ENCODE measurements at regions of chr17 and their contacts with region 1.

Region 1: DNA sequence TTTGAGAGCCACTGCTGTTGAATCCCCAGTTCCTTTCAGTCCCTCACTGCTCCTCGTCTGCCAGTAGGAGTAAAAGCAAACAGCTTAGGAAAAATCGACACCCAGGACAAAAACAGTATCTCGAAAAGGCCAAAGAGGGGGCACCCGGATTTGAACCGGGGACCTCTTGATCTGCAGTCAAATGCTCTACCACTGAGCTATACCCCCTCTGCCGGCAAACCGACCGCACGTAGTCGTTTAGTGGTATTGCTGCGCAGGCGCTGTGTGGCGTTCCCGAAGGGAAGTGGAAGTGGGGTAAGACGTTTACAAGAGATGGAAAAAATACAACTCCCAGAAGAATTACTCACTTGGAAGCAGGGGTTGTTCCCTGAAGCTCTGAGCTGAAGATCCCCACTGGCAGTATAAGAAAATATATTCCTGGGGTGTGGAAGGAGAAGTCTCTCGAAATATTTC is 2.2 kb upstream of the PLXDC1 start:
- DNase-seq: peak; percentile 96
- H3K4me3 Mint-ChIP-seq: peak overlapping the region; percentile 94
- H3K27ac Mint-ChIP-seq: peak overlapping the region; percentile 95
- H3K4me1 Mint-ChIP-seq: peaks cover 27% of the 10 kb centered on the region
- H3K27me3 Mint-ChIP-seq: peaks cover 4% of the 10 kb centered on the region

Region 2: DNA sequence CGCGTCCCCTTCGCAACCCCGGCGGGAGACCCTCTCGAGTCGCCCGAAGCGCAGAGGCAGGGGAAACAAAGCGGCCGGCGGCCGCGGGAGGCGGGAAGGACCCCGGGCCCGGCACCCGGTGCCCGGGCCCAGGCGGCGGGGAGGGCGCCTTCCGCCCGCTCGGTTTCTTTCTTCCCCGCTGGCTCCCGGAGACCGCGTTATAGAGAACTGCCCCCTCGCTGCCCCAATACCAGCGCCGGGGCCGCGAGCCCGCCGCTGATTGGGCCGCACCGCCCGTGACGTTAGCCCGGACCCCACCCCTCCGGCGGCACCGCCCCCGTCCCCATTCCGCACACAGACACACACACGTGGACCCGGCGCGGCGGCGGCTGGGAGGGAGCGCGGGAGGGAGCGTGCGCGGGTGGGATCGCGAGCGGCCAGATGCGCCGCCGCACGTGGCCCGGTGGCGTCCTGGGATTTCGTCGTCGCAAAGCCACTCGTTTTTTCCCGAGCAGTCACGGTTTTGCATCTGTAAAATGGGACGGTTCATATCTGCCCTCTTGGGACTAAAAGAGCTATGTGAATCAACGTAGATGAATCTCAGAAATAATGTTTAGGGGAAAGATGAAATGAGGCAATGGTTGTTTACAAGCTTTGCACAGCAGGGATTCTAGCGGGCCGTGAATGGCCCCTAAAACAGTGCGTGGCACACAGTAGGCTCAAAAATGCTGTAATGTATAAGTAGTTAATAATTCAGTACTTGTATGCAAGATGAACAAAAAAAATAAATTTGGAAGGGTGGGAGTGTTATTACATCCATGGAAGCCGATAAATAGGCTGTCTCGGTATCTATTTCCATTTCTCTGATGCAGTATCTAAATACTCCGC is 478.6 kb before region 1 on chr17 and contains the start of gene EPOP:
- CTCF ChIA-PET with region 1: no interaction called
- intact Hi-C with region 1: loop called (anchors 5 kb)
- DNase-seq: peak; percentile 91
- H3K4me3 Mint-ChIP-seq: peak within 1 kb of the TSS; percentile 63
- H3K27ac Mint-ChIP-seq: peak within 1 kb of the TSS; percentile 84
- H3K4me1 Mint-ChIP-seq: peaks cover 52% of the 10 kb centered on the region
- H3K27me3 Mint-ChIP-seq: peaks cover 13% of the 10 kb centered on the region
- total RNA-seq, gene EPOP: 17.6 to 19.2 TPM

Region 3: GRCh38 chr17:38752119-38752929 is 401.3 kb before region 1 on chr17 and contains the start of gene PSMB3:
- CTCF ChIA-PET with region 1: no interaction called
- intact Hi-C with region 1: loop called (anchors 1 kb)
- DNase-seq: peak; percentile 99
- H3K4me3 Mint-ChIP-seq: peak within 1 kb of the TSS; percentile 91
- H3K27ac Mint-ChIP-seq: peak within 1 kb of the TSS; percentile 95
- H3K4me1 Mint-ChIP-seq: peaks cover 48% of the 10 kb centered on the region
- H3K27me3 Mint-ChIP-seq: peaks cover 26% of the 10 kb centered on the region
- total RNA-seq, gene PSMB3: 368 to 369 TPM

Region 4: DNA sequence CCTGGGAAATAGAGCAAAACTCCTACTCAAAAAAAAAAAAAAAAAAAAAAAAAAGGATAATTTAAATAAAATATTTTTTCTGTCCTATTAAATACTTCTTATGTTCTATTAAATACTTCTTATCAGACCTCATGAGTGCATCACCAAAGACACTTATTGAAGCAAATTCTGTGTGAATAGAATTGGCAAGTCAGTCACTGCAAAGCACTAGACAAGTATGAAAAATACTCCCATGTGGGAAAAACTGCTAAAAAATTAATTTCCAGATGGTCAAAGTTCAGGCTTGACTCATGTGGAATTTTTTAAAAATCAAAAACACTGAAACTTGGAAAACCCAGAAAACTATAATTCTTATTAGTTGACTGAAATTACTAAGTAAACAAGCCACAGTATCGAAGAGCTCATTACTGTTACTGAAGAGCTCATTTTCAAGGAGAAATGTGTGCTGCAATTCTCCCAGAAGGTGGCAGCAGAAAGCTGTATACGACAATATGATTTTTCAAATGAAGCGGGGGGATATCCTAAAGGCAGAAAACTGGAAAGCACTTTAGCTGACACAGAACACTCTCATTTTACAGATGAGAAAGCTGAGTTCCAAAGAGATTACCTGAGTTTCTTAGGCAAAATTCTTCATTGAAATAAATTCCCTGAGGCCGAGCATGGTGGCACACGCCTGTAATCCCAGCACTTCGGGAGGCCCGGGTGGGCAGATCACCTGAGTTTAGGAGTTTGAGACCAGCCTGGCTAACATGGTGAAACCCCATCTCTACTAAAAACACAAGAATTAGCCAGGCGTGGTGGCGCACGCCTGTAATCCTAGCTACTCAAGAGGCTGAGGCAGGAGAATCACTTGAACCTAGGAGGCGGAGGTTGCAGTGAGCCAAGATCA is 170.5 kb before region 1 on chr17:
- CTCF ChIA-PET with region 1: interaction called, 106 read pairs
- intact Hi-C with region 1: loop called (anchors 1 kb)
- DNase-seq: peak; percentile 66
- H3K4me3 Mint-ChIP-seq: no peak overlapping the region
- H3K27ac Mint-ChIP-seq: no peak overlapping the region
- H3K4me1 Mint-ChIP-seq: no peaks in the 10 kb centered on the region
- H3K27me3 Mint-ChIP-seq: no peaks in the 10 kb centered on the region

Region 5: DNA sequence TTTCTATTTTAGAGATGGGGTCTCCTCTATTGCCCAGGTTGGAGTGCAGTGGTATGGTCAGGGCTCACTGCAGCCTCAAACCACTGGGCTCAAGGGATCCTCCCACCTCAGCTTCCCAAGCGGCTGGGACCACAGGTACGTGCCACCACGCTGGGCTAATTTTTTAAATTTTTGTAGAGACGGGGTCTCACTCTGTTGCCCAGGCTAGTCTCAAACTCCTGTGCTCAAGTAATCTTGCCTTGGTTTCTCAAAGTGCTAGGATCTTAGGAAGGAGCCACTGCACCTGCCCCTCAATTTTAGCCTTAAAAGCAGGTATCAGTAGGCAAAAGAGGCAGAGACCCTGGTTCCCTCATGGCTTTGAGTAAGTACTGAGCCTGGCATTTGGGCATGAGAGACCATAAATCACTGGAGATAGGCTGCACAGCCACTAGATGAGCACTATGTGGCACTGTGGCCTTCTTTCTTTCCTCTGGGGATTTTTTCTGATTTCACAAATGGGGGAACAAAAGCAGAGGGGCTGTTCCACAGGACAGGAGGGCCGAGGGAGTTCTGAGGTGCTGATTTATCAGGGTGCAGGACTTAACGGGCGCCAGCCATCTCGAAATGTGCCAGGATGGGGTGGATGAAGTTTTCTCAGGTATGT is 84.4 kb before region 1 on chr17:
- CTCF ChIA-PET with region 1: interaction called, 10 read pairs
- intact Hi-C with region 1: loop called (anchors 1 kb)
- DNase-seq: peak; percentile 32
- H3K4me3 Mint-ChIP-seq: no peak overlapping the region
- H3K27ac Mint-ChIP-seq: no peak overlapping the region
- H3K4me1 Mint-ChIP-seq: peaks cover 2% of the 10 kb centered on the region
- H3K27me3 Mint-ChIP-seq: no peaks in the 10 kb centered on the region

Region 6: GRCh38 chr17:39134878-39135277 is 18.7 kb before region 1 on chr17:
- CTCF ChIA-PET with region 1: no interaction called
- intact Hi-C with region 1: no loop called
- DNase-seq: no peak
- H3K4me3 Mint-ChIP-seq: no peak overlapping the region
- H3K27ac Mint-ChIP-seq: no peak overlapping the region
- H3K4me1 Mint-ChIP-seq: no peaks in the 10 kb centered on the region
- H3K27me3 Mint-ChIP-seq: no peaks in the 10 kb centered on the region

Region 7: DNA sequence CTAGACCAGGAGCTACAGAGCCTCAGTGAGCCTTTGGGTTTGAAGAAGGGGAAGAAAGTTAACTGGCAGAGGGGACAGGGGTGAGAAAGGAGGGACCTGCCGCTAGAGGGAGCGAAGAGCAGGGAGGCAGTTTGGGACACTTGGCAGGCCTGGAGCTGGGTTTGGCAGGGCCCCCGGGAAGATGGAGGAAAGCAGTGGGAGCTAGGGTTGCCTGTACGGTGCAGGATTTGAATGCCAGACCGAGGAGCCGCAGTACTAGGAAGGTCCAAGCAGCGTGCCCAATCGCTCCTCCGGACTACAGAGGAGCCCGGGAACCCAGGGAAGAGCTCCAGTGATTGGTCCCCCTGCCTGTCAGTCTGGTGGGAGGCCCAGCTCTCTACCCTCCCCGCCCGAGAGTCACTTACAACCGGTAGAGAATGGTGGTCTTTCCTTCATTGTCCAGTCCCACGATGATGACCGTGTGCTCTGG is 11.1 kb after region 1 on chr17:
- CTCF ChIA-PET with region 1: interaction called, 69 read pairs
- intact Hi-C with region 1: loop called (anchors 1 kb)
- DNase-seq: peak; percentile 83
- H3K4me3 Mint-ChIP-seq: peak overlapping the region; percentile 90
- H3K27ac Mint-ChIP-seq: no peak overlapping the region
- H3K4me1 Mint-ChIP-seq: peaks cover 16% of the 10 kb centered on the region
- H3K27me3 Mint-ChIP-seq: peaks cover 23% of the 10 kb centered on the region